ENCODE measurements at regions of chr9 and their contacts with region 1.

Region 1: DNA sequence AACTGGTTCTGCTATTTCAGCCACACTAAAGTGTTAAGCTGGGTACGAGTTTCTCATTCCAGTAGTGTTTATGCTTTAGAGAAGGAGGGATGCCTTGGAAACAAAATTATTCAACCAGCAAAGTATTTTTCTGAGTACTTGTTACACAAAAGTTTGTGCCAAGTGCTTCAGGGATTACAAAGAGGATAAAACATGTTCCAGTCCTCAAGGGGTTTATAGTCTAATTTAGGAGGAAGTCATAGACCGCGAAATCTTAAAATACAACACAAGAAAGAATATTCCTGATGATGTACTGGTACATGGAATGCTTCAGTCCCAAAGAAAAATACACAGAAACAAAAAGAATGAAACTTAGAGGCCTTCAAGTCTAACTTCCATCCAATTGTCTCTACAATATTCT is 85.4 kb upstream of the NR4A3 start:
- DNase-seq: no peak
- H3K4me3 Mint-ChIP-seq: no peak overlapping the region
- H3K27ac Mint-ChIP-seq: no peak overlapping the region
- H3K4me1 Mint-ChIP-seq: no peaks in the 10 kb centered on the region
- H3K27me3 Mint-ChIP-seq: peaks cover 3% of the 10 kb centered on the region

Region 2: DNA sequence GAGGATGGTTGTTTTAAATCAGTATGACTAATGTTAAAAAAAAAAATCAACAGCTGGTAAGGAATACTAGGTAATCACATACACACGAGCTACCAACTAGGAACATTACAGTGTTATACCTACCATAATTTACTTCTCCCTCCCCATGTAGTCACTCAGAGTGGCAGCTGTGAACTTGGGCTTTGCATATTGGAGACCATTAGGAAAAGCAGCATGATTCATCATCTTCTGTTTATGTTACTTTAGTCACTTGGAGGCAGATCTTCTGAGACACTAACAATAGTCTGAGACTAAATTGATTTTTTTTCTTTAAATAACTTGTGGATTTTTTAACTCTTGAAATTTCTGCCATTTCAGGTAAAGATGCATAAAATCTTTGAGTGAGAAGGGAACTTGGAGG is 56.1 kb before region 1 on chr9:
- CTCF ChIA-PET with region 1: no interaction called
- intact Hi-C with region 1: loop called (anchors 5 kb)
- DNase-seq: no peak
- H3K4me3 Mint-ChIP-seq: no peak overlapping the region
- H3K27ac Mint-ChIP-seq: no peak overlapping the region
- H3K4me1 Mint-ChIP-seq: no peaks in the 10 kb centered on the region
- H3K27me3 Mint-ChIP-seq: no peaks in the 10 kb centered on the region

Measured in activated naive CD4-positive, alpha-beta T cell treated with anti-CD3 and anti-CD28 coated beads for 36 hours (primary cell).